Breast epithelium (tissue), 4 donors: ENCODE measurements at regions of chr15 and their contacts with region 1.

Region 1: GRCh38 chr15:76968310-76968709 is 26.6 kb upstream of the PSTPIP1 start:
- DNase-seq: no peak
- H3K4me3 ChIP-seq: no peak overlapping the region
- H3K27ac ChIP-seq: no peak overlapping the region
- H3K4me1 ChIP-seq: no peaks in the 10 kb centered on the region
- H3K27me3 ChIP-seq: no peaks in the 10 kb centered on the region
- CTCF ChIP-seq: no peak
- POLR2A ChIP-seq: no peak

Region 2: DNA sequence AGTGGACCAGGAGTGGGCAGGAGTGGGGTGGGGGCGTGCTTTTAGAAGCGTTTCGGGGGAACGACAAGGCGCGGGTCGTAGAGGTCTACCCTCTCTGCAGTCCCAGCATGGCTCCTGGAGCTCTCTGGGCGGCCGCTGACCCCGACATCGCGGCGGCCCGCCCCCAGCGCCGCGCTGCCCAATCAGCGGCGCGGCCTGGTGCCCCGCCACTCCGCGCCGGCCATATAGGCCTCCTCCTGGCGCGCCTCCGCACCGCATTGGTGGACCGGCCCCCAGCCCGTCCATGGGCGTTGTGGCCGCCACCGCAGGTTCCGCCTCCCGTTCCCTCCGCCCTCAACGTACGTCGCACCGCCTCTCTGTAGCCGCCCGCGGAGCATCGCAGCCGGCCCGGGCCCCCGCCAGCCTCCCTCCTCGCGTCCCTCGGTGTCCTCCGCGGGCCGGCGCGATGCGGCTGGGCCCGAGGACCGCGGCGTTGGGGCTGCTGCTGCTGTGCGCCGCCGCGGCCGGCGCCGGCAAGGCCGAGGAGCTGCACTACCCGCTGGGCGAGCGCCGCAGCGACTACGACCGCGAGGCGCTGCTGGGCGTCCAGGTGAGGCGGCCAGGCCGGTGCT is 36.8 kb before region 1 on chr15 and contains the start of gene RCN2:
- intact Hi-C with region 1: loop called (anchors 2 kb)
- DNase-seq: peak; percentile 93 to 94
- H3K4me3 ChIP-seq: peak within 1 kb of the TSS; percentile 78 to 87 (median 81)
- H3K27ac ChIP-seq: peak within 1 kb of the TSS; percentile 85 to 88
- H3K4me1 ChIP-seq: no peaks in the 10 kb centered on the region
- H3K27me3 ChIP-seq: no peaks in the 10 kb centered on the region
- CTCF ChIP-seq: no peak
- POLR2A ChIP-seq: peak; percentile 60
- total RNA-seq, gene RCN2: 40.6 to 47.2 (median 46.2) TPM